ENCODE measurements at regions of chr5 and their contacts with region 1.

Region 1: GRCh38 chr5:65871182-65871581 is 55.2 kb upstream of the ERBIN start:
- DNase-seq: no peak
- ATAC-seq: no peak
- H3K4me3 ChIP-seq: no peak overlapping the region
- H3K4me3 Mint-ChIP-seq: no peak overlapping the region
- H3K27ac ChIP-seq: no peak overlapping the region
- H3K27ac Mint-ChIP-seq: peak overlapping the region; percentile 7
- H3K4me1 ChIP-seq: peaks cover 15% of the 10 kb centered on the region
- H3K4me1 Mint-ChIP-seq: peaks cover 22% of the 10 kb centered on the region
- H3K27me3 ChIP-seq: no peaks in the 10 kb centered on the region
- H3K27me3 Mint-ChIP-seq: no peaks in the 10 kb centered on the region
- CTCF ChIP-seq: no peak

Region 2: GRCh38 chr5:65796269-65796668 is 74.9 kb before region 1 on chr5:
- CTCF ChIA-PET with region 1: no interaction called
- POLR2A ChIA-PET with region 1: no interaction called
- intact Hi-C with region 1: loop called in 1 of 2 experiments (anchors 5 kb)
- DNase-seq: no peak
- ATAC-seq: no peak
- H3K4me3 ChIP-seq: no peak overlapping the region
- H3K4me3 Mint-ChIP-seq: no peak overlapping the region
- H3K27ac ChIP-seq: no peak overlapping the region
- H3K27ac Mint-ChIP-seq: no peak overlapping the region
- H3K4me1 ChIP-seq: no peaks in the 10 kb centered on the region
- H3K4me1 Mint-ChIP-seq: peaks cover 4% of the 10 kb centered on the region
- H3K27me3 ChIP-seq: no peaks in the 10 kb centered on the region
- H3K27me3 Mint-ChIP-seq: no peaks in the 10 kb centered on the region
- CTCF ChIP-seq: no peak

Measured in CD8-positive, alpha-beta T cell (primary cell).